HAP-1 (cell line): ENCODE measurements at regions of chr4 and their contacts with region 1.

Region 1: DNA sequence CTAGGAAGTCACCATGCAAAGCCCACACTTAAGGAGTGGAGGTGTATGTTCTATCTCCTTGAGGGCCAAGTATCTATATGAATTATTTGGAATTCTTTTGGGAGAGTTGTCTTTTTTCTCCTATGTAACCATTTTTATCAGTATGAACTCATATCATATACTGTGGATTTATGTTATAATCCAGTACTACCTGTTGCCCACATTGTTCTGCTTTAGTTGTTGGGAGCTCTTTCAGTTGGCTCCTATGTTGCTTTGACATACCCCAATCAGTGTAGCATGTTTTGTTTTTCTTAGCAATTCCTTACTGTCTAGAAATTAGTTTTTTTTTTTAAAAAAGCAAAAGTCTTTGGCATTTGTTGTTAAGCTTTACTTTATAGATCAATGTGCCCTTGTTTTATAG is 13.0 kb downstream of the UCHL1 start:
- DNase-seq: no peak
- H3K4me3 ChIP-seq: no peak overlapping the region
- H3K4me1 ChIP-seq: no peaks in the 10 kb centered on the region
- H3K27me3 ChIP-seq: no peaks in the 10 kb centered on the region

Region 2: GRCh38 chr4:41678086-41678816 is 408.6 kb after region 1 on chr4:
- in situ Hi-C with region 1: loop called (anchors 10 kb)
- DNase-seq: no peak
- H3K4me3 ChIP-seq: no peak overlapping the region
- H3K4me1 ChIP-seq: no peaks in the 10 kb centered on the region
- H3K27me3 ChIP-seq: no peaks in the 10 kb centered on the region